WTC11 (cell line): ENCODE measurements at regions of chr4 and their contacts with region 1.

Region 1: DNA sequence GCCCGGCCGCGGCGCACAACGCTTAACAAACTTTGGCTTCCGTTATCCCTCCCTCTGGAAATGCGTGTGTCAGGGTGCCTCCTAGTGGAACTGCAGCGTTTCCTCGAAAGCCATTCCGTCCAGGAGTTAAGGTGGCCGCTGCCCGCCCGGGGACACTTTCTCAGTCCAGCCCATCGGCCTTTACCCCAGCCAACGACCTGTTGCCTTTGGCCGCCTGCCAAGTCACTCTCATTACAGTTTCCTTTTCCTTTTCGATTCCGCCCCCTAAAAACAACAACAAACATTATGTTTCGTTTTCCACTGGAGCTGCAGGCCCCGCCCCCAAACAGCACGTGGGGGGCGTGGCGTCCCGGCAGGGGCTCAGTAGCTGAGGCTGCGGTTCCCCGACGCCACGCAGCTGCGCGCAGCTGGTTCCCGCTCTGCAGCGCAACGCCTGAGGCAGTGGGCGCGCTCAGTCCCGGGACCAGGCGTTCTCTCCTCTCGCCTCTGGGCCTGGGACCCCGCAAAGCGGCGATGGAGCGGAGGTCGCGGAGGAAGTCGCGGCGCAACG is at the start of gene HERC5:
- DNase-seq: peak; percentile 86
- ATAC-seq: peak; percentile 88
- H3K4me3 Mint-ChIP-seq: peak within 1 kb of the TSS; percentile 90
- H3K27ac Mint-ChIP-seq: peak within 1 kb of the TSS; percentile 98
- H3K4me1 Mint-ChIP-seq: peaks cover 27% of the 10 kb centered on the region
- H3K27me3 Mint-ChIP-seq: peaks cover 29% of the 10 kb centered on the region
- CTCF ChIP-seq: no peak
- total RNA-seq, gene HERC5: 14.3 to 17.2 TPM (median 17.1 TPM) in 3 replicates

Region 2: GRCh38 chr4:88275516-88275915 is 181.3 kb before region 1 on chr4:
- CTCF ChIA-PET with region 1: no interaction called
- POLR2A ChIA-PET with region 1: no interaction called
- DNase-seq: no peak
- ATAC-seq: no peak
- H3K4me3 Mint-ChIP-seq: no peak overlapping the region
- H3K27ac Mint-ChIP-seq: no peak overlapping the region
- H3K4me1 Mint-ChIP-seq: peaks cover 28% of the 10 kb centered on the region
- H3K27me3 Mint-ChIP-seq: 0 out of 2 replicates have a peak, but pooled peaks cover 2% of the 10 kb centered on the region
- CTCF ChIP-seq: no peak

Region 3: GRCh38 chr4:88378691-88379559 is 77.9 kb before region 1 on chr4 and contains the start of gene HERC6:
- CTCF ChIA-PET with region 1: interaction called, 25 read pairs
- POLR2A ChIA-PET with region 1: interaction called, 9 read pairs
- DNase-seq: peak; percentile 81
- ATAC-seq: peak; percentile 95
- H3K4me3 Mint-ChIP-seq: peak within 1 kb of the TSS; percentile 81
- H3K27ac Mint-ChIP-seq: peak within 1 kb of the TSS; percentile 95
- H3K4me1 Mint-ChIP-seq: 0 out of 2 replicates have a peak, but pooled peaks cover 5% of the 10 kb centered on the region
- H3K27me3 Mint-ChIP-seq: peaks cover 17% of the 10 kb centered on the region
- CTCF ChIP-seq: peak; percentile 34
- total RNA-seq, gene HERC6: 4.1 to 6.7 TPM (median 6.1 TPM) in 3 replicates

Region 4: GRCh38 chr4:88446124-88446523 is 10.7 kb before region 1 on chr4:
- CTCF ChIA-PET with region 1: interaction called, 24 read pairs
- POLR2A ChIA-PET with region 1: interaction called, 3 read pairs
- DNase-seq: no peak
- ATAC-seq: peak; percentile 28
- H3K4me3 Mint-ChIP-seq: no peak overlapping the region
- H3K27ac Mint-ChIP-seq: peak overlapping the region; percentile 65; the same call in 1 of the 2 replicates
- H3K4me1 Mint-ChIP-seq: peaks cover 45% of the 10 kb centered on the region
- H3K27me3 Mint-ChIP-seq: no peaks in the 10 kb centered on the region
- CTCF ChIP-seq: no peak

Region 5: GRCh38 chr4:88481537-88481936 is 24.7 kb after region 1 on chr4:
- CTCF ChIA-PET with region 1: no interaction called
- POLR2A ChIA-PET with region 1: no interaction called
- DNase-seq: no peak
- ATAC-seq: no peak
- H3K4me3 Mint-ChIP-seq: no peak overlapping the region
- H3K27ac Mint-ChIP-seq: no peak overlapping the region
- H3K4me1 Mint-ChIP-seq: no peaks in the 10 kb centered on the region
- H3K27me3 Mint-ChIP-seq: no peaks in the 10 kb centered on the region
- CTCF ChIP-seq: no peak